Activated CD4-positive, alpha-beta memory T cell treated with anti-CD3 and anti-CD28 coated beads for 36 hours (primary cell): ENCODE measurements at regions of chr9 and their contacts with region 1.

Region 1: DNA sequence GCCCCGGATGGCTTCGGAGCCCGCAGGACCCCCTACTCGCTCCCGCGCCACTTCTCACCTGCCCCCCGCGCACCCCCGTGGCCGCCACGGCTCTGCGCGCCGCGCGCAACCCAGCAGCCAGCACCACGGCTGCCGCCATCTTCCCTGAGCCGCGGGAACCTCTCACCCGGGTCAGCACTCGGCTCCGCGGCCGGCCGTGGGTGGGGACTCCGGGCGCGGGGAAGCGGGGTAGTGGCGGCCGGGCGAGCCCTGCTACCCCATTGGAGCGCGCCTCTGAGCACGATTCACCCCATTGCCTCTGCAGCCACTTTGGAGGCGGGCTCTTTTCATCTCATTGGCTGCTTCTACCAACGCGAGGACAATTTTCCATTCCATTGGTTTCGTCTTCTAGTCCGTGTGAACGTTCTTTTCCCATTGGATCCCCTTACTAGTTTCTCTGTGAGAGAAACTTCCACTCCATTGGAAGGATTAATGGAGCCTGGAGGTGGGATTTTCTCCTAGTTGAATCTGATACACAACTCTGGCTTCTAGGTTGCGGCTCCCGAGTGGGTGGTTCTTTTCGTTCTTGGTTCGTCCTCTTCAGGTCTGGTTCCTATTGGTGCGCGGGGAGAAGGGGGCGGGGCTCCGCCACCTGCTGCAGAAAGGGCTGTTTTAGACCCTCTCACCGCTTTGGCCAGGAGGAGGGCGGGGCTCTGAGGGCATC is at the start of gene HINT2:
- DNase-seq: peak; percentile 99
- H3K4me3 Mint-ChIP-seq: peak within 1 kb of the TSS; percentile 96
- H3K27ac Mint-ChIP-seq: peak within 1 kb of the TSS; percentile 93
- H3K4me1 Mint-ChIP-seq: peaks cover 33% of the 10 kb centered on the region
- H3K27me3 Mint-ChIP-seq: no peaks in the 10 kb centered on the region
- total RNA-seq, gene HINT2: 67.8 to 72.6 TPM

Region 2: DNA sequence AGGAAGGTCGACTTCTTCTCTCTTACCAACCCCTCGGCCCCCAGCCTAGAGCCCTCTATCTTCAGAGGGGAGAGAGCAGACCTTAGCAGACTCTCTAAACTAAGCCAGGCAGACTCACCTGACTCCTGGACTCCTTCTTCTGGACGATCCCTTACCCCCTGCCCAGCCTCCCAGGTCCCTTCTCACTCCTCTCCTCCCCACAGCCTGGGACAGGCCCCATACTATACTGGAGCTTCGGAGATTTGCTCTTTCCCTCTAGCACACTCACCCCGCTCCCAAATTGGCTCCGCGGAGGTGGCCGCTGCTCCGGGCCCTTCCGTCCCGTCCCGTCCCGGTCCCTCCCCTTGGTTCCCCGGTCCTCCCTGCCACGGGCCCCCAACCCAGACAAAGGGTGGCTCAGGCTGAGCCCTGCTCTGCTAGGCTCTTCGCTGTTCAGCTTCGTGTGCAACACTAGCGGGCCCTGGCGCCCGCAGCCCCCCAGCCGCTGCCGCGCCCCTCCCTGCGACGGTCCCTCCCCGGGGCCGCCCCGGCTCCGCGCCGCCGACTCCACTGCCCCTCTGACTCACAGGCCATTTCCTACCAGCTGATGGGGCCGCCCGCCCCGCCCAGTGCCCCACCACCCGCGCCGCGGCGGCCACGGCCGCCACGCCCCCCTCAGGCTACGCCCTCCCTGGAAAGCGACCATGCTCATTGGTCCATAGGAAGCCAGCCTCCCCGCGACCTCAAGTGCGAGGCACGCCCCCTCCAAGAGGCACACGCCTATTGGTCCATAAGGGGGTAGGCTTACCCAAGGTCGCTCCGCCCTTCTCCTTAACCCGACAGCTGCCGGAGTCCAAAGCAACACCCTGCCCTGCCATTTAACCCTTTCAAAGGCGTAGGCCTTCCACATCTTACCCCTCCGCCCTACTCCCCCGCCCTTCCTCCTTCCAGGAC is 703.7 kb before region 1 on chr9:
- CTCF ChIA-PET with region 1: no interaction called
- POLR2A ChIA-PET with region 1: no interaction called
- intact Hi-C with region 1: loop called (anchors 5 kb)
- DNase-seq: peak; percentile 98
- H3K4me3 Mint-ChIP-seq: peak overlapping the region; percentile 75
- H3K27ac Mint-ChIP-seq: peak overlapping the region; percentile 81
- H3K4me1 Mint-ChIP-seq: peaks cover 42% of the 10 kb centered on the region
- H3K27me3 Mint-ChIP-seq: no peaks in the 10 kb centered on the region

Region 3: DNA sequence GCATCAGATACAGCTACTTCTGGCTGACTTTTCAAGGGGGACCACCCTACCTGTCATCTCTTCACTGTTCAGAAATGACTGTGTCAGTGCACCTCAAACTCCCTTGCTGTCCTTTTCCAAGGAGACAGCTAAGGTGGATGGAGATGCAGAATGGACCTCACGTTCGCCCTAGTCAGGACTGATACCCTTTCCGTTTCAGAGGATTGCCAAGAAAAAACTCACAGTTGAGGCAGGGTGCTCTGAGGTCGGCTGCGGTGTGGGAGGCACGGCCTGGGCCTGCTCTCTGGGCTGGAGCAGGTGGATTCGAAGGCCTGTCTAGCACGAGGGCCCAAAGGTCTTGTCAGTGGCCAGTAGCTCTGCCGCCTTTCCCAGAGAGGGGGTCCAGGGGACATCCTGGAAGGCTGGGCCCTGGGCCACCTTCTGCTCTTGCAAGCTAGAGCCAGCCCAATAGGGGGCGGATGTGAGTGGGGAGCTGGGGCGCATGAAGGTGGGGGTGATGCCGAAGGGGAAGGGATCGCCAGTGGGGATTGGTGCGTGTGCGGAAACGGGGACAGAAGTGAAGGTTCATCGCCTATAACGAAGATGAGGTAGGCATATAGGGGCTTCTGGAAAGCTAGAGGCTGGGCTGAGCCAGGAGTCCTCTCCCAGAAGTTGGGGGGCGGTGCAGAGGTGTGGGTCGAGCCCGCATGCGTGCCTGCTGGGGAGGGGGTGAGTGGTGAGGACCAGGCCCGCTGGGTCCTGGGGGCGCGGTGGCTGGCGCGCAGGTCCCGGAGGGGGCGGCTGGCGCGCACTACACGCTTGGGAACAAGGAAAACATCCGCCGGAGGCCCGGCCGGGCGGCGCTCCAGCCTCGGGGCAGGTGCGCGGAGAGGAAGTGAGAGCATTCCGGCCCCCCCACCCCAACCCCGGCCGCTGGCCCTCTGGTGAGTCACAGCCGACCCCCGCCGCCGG is 58.4 kb before region 1 on chr9:
- CTCF ChIA-PET with region 1: interaction called, 7 read pairs
- POLR2A ChIA-PET with region 1: no interaction called
- intact Hi-C with region 1: loop called (anchors 1 kb)
- DNase-seq: peak; percentile 89
- H3K4me3 Mint-ChIP-seq: peak overlapping the region; percentile 96
- H3K27ac Mint-ChIP-seq: peak overlapping the region; percentile 95
- H3K4me1 Mint-ChIP-seq: peaks cover 35% of the 10 kb centered on the region
- H3K27me3 Mint-ChIP-seq: no peaks in the 10 kb centered on the region

Region 4: GRCh38 chr9:35798658-35799374 is 16.2 kb before region 1 on chr9:
- CTCF ChIA-PET with region 1: interaction called, 4 read pairs
- POLR2A ChIA-PET with region 1: interaction called, 3 read pairs
- intact Hi-C with region 1: loop called (anchors 1 kb)
- DNase-seq: peak; percentile 69
- H3K4me3 Mint-ChIP-seq: no peak overlapping the region
- H3K27ac Mint-ChIP-seq: peak overlapping the region; percentile 64
- H3K4me1 Mint-ChIP-seq: peaks cover 26% of the 10 kb centered on the region
- H3K27me3 Mint-ChIP-seq: no peaks in the 10 kb centered on the region

Region 5: GRCh38 chr9:35844716-35845270 is 29.8 kb after region 1 on chr9:
- CTCF ChIA-PET with region 1: interaction called, 3 read pairs
- POLR2A ChIA-PET with region 1: no interaction called
- intact Hi-C with region 1: loop called (anchors 2 kb)
- DNase-seq: no peak
- H3K4me3 Mint-ChIP-seq: no peak overlapping the region
- H3K27ac Mint-ChIP-seq: no peak overlapping the region
- H3K4me1 Mint-ChIP-seq: peaks cover 36% of the 10 kb centered on the region
- H3K27me3 Mint-ChIP-seq: no peaks in the 10 kb centered on the region